Mammary epithelial cell (primary cell): ENCODE measurements at regions of chr13 and their contacts with region 1.

Region 1: GRCh38 chr13:48412881-48413351 is at the start of gene LPAR6:
- DNase-seq: peak; percentile 62
- H3K4me3 ChIP-seq: peak within 1 kb of the TSS; percentile 62 to 78 (median 67)
- H3K27ac ChIP-seq: peak within 1 kb of the TSS; percentile 85
- H3K4me1 ChIP-seq: no peaks in the 10 kb centered on the region
- H3K27me3 ChIP-seq: no peaks in the 10 kb centered on the region
- CTCF ChIP-seq: no peak
- total RNA-seq, gene LPAR6: 7.9 to 17.2 TPM

Region 2: DNA sequence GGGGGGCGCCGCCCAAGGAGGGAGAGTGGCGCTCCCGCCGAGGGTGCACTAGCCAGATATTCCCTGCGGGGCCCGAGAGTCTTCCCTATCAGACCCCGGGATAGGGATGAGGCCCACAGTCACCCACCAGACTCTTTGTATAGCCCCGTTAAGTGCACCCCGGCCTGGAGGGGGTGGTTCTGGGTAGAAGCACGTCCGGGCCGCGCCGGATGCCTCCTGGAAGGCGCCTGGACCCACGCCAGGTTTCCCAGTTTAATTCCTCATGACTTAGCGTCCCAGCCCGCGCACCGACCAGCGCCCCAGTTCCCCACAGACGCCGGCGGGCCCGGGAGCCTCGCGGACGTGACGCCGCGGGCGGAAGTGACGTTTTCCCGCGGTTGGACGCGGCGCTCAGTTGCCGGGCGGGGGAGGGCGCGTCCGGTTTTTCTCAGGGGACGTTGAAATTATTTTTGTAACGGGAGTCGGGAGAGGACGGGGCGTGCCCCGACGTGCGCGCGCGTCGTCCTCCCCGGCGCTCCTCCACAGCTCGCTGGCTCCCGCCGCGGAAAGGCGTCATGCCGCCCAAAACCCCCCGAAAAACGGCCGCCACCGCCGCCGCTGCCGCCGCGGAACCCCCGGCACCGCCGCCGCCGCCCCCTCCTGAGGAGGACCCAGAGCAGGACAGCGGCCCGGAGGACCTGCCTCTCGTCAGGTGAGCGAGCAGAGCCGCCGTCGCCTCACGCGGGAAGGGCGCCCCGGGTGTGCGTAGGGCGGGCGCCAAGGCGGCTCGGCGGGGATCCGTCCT is 109.4 kb before region 1 on chr13 and contains the start of gene RB1:
- CTCF ChIA-PET with region 1: no interaction called
- dilution Hi-C with region 1: no loop called
- in situ Hi-C with region 1: no loop called
- intact Hi-C with region 1: loop called (anchors 1 kb)
- DNase-seq: peak; percentile 94
- H3K4me3 ChIP-seq: peak within 1 kb of the TSS; percentile 65 to 99 (median 86)
- H3K27ac ChIP-seq: peak within 1 kb of the TSS; percentile 97
- H3K4me1 ChIP-seq: peaks cover 18% of the 10 kb centered on the region
- H3K27me3 ChIP-seq: no peaks in the 10 kb centered on the region
- CTCF ChIP-seq: peak in 1 of 2 donors; percentile 1
- total RNA-seq, gene RB1: 34.7 to 48.6 TPM

Region 3: DNA sequence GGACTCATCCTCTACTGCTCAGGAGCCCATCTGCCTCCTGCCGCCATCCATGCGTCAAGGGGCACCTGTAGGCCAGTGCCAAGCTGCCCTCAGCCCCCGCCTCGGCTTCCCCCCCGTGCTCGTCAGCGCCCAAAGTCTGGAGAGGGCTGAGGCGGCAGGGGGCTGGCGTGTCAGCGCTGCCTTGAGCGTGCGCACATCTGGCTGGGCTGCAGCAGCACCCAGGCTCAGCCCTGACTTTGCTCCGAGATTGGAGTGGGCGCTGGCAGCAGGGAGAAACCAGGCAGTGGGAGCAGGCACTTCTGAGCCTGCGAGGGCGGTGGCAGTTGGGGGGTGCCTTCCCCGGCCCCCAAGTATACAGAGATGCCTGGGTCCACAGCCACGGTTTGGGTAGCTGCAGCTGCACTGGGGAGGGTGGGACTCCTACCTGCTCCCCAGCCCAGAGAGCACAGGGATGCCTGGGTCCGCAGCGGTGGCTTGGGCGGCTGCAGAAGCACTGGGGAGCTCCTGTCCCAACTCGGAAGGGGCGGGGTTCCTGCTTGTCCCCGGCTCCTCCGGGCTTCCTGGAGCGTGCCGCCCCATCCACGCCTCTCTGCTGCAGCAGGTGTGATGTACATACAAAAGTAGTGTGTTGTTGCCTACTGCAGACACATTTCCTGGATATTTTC is 44.8 kb after region 1 on chr13:
- CTCF ChIA-PET with region 1: no interaction called
- dilution Hi-C with region 1: no loop called
- in situ Hi-C with region 1: no loop called
- intact Hi-C with region 1: no loop called
- DNase-seq: no peak
- H3K4me3 ChIP-seq: no peak overlapping the region
- H3K27ac ChIP-seq: no peak overlapping the region
- H3K4me1 ChIP-seq: no peaks in the 10 kb centered on the region
- H3K27me3 ChIP-seq: no peaks in the 10 kb centered on the region
- CTCF ChIP-seq: no peak

Region 4: GRCh38 chr13:48505597-48506091 is 92.7 kb after region 1 on chr13:
- CTCF ChIA-PET with region 1: no interaction called
- dilution Hi-C with region 1: no loop called
- in situ Hi-C with region 1: no loop called
- intact Hi-C with region 1: loop called (anchors 5 kb)
- DNase-seq: peak; percentile 51
- H3K4me3 ChIP-seq: no peak overlapping the region
- H3K27ac ChIP-seq: peak overlapping the region; percentile 53
- H3K4me1 ChIP-seq: peaks cover 54% of the 10 kb centered on the region
- H3K27me3 ChIP-seq: no peaks in the 10 kb centered on the region
- CTCF ChIP-seq: no peak

Region 5: DNA sequence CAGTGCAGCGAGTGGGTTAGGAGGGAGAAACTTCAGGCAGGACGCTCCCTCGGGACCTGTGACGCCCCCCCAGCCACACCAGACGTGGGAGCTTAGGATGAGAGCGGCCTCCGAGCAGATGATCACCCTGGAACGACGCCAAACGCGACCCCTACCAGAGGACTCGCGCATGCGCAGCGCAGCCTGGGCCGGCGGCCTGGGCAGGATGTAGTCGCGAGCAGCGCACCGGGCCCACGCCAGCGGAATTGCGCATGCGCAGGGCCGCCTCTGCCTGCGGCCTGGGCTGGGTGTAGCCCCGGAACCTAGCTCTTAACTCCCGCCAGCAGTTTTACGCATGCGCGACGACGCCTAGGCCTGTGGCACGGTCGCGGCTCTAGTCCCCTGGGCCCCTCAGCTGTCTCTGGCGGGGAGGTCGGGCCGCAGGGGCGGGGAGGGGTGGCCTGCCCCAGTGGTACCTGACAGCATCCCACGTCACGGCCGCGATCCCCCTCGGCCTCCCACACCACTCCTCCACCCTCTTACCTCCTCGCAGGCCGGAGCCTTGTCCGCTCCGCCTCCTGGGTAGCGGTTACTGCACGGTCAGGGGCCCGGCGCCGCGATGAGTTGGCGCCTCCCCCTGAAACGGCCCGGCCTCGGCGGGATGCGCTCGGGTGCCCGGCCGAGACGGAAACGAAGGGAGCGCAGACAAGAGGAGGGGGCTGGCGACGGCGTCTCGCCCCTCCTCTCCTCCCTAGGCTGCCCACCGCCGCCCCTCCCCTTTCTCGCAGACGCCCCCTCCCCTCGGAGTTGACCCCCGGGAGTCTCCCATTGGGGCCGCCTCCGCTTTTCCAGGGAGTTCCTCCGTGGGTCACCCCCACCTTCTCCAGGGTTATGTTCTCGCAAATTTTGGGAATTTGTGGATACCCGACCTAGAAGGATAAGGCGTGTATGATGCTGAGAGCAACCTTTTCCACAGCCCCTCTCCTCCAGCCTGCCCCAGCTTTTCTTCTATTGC is 119.9 kb after region 1 on chr13 and contains the start of gene RCBTB2:
- CTCF ChIA-PET with region 1: no interaction called
- dilution Hi-C with region 1: no loop called
- in situ Hi-C with region 1: no loop called
- intact Hi-C with region 1: loop called (anchors 5 kb)
- DNase-seq: peak; percentile 95
- H3K4me3 ChIP-seq: peak within 1 kb of the TSS; percentile 65 to 78 (median 75)
- H3K27ac ChIP-seq: peak within 1 kb of the TSS; percentile 87
- H3K4me1 ChIP-seq: peaks cover 13% of the 10 kb centered on the region
- H3K27me3 ChIP-seq: no peaks in the 10 kb centered on the region
- CTCF ChIP-seq: peak in 1 of 2 donors; percentile 6
- total RNA-seq, gene RCBTB2: 4.9 to 12.0 TPM

Region 6: GRCh38 chr13:48749699-48750473 is 337.0 kb after region 1 on chr13:
- CTCF ChIA-PET with region 1: no interaction called
- dilution Hi-C with region 1: no loop called
- in situ Hi-C with region 1: no loop called
- intact Hi-C with region 1: no loop called
- DNase-seq: peak; percentile 99
- H3K4me3 ChIP-seq: no peak overlapping the region
- H3K27ac ChIP-seq: peak overlapping the region; percentile 82
- H3K4me1 ChIP-seq: peaks cover 22% of the 10 kb centered on the region
- H3K27me3 ChIP-seq: no peaks in the 10 kb centered on the region
- CTCF ChIP-seq: peak; percentile 42 to 64